Natural killer cell (primary cell): ENCODE measurements at regions of chr3 and their contacts with region 1.

Region 1: DNA sequence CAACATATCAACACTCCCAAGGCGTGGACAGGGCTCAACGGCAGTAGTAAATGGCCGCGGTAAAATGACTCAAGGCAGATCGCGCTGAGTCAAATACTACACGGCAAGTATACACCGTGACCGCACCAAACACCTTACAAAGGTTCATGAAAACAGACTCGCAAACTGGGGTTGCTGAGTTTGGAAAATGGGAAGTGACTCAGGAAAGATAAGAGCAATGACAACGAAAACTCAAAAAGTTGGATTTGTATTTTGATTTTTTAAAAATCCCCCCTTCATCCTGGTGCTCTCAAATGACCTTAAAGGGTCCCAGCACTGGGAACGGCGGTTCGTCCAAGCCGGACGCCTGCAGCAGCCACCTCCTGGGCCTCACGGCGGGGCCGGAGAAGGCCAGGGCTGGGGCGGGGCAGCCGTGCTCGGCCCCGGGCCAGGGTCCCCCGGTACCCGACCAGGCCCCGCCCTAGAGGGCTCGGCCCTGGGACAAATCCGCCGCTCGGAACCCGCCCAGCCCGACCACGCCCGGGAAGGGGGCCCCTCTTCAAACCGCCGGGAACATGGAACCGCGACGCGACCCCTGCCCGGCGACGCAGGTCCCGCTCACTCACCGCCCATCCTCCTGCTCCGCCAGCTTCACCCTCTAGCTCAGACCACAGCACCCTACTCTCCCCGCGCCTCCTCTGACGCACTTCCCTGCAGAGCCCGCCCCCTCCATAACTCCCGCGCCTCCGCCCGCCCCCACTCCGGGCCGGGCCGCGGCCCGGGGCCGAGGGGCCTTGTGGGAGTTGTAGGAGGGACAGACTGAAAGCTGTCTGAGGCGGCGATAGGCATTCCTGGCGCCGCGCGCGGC is at the start of gene CLDND1:
- DNase-seq: peak; percentile 88 to 96
- ATAC-seq: peak; percentile 94 to 100 (median 96)
- H3K4me3 ChIP-seq: peak within 1 kb of the TSS; percentile 69
- H3K4me3 Mint-ChIP-seq: peak within 1 kb of the TSS; percentile 92
- H3K27ac ChIP-seq: peak within 1 kb of the TSS; percentile 87
- H3K27ac Mint-ChIP-seq: peak within 1 kb of the TSS; percentile 51 to 86
- H3K4me1 ChIP-seq: peaks cover 15% of the 10 kb centered on the region
- H3K4me1 Mint-ChIP-seq: peaks cover 58 to 62% of the 10 kb centered on the region in 2 donors
- H3K27me3 ChIP-seq: no peaks in the 10 kb centered on the region
- H3K27me3 Mint-ChIP-seq: no peaks in the 10 kb centered on the region
- CTCF ChIP-seq: no peak
- total RNA-seq, gene CLDND1: 175 to 220 (median 219) TPM

Region 2: DNA sequence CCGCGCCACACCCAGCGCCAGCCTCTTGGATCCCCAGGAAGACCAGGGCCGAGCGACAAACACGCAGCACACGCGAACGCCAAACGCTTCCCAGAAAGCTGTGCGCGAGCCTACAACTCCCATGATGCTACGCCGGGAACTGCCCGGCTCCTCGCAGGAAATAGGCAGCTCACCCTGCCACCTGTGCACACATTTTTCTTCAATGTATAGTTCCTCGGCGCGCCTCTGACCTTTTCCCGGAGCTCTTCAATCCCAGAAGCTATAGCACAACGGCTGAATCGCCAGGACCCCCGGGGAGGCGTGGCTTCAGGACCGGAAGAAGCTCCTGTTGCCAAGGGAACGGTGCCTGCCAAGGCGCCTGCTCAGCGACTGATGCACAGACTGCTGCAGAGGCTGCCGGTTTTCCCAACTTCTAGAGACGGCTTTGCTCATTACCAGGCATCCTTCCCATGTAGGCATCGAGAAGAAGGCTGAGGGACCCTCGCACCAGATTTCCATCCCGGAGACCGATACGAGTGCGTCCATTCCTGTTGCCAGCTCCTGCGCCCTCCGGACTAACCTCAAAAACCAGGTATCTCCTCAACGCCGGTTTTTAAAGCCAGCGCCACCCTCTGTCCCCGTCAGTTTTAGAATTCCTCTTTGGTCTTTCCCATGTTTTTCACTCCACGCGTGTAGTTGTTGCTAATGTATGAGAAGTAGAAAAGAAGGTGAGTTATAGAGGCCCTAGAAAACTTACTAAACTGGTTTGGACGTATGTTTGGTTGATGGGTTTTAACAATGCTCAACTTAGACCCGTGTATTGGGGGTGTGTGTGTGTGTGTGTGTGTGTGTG is 757.8 kb before region 1 on chr3 and contains the start of gene ARL6:
- intact Hi-C with region 1: loop called (anchors 5 kb)
- DNase-seq: peak; percentile 56 to 82
- ATAC-seq: peak; percentile 89 to 90 (median 90)
- H3K4me3 ChIP-seq: peak within 1 kb of the TSS; percentile 91
- H3K4me3 Mint-ChIP-seq: peak within 1 kb of the TSS; percentile 98
- H3K27ac ChIP-seq: peak within 1 kb of the TSS; percentile 57
- H3K27ac Mint-ChIP-seq: peak within 1 kb of the TSS; percentile 86 to 91
- H3K4me1 ChIP-seq: peaks cover 5% of the 10 kb centered on the region
- H3K4me1 Mint-ChIP-seq: peaks cover 21 to 25% of the 10 kb centered on the region in 2 donors
- H3K27me3 ChIP-seq: no peaks in the 10 kb centered on the region
- H3K27me3 Mint-ChIP-seq: peaks cover 0 to 2% of the 10 kb centered on the region in 2 donors
- CTCF ChIP-seq: no peak
- total RNA-seq, gene ARL6: 2.1 to 4.9 (median 2.3) TPM

Region 3: DNA sequence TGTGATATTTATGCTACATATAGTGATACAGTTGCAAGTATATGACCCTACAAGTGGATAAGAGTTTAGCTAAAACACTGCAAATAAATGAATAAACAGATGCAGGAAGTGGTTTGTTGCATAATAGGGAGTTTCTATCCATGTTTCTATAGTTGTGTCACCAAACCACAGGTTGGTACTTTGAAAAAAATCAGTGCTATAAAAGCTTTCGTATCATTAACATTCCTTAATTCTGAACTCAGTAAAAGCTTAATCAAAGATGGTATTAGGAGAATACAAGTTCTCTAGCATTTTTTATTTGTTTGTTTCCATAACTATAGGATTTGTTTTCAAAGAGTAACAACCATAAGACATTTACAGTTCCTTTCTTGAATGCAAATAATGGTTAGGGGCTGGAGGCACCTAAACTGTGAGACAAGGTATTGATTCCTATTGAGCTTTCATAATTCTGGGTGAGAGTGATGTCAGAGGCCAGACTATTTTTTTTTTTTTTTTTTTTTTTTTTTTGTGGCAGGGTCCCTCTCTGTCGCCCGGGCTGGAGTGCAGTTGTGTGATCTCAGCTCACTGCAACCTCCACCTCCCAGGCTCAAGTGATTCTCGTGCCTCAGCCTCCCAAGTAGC is 41.3 kb after region 1 on chr3:
- intact Hi-C with region 1: loop called (anchors 1 kb)
- DNase-seq: peak in 1 of 2 donors; percentile 83
- ATAC-seq: peak; percentile 47 to 54 (median 52)
- H3K4me3 ChIP-seq: no peak overlapping the region
- H3K4me3 Mint-ChIP-seq: peak overlapping the region; percentile 32
- H3K27ac ChIP-seq: peak overlapping the region; percentile 92
- H3K27ac Mint-ChIP-seq: peak overlapping the region; percentile 90 to 91
- H3K4me1 ChIP-seq: peaks cover 45% of the 10 kb centered on the region
- H3K4me1 Mint-ChIP-seq: peaks cover 63 to 64% of the 10 kb centered on the region in 2 donors
- H3K27me3 ChIP-seq: no peaks in the 10 kb centered on the region
- H3K27me3 Mint-ChIP-seq: no peaks in the 10 kb centered on the region
- CTCF ChIP-seq: no peak

Region 4: GRCh38 chr3:98573181-98573728 is 50.8 kb after region 1 on chr3:
- intact Hi-C with region 1: loop called (anchors 2 kb)
- DNase-seq: peak in 1 of 2 donors; percentile 66
- ATAC-seq: peak in 2 of 3 donors; percentile 52 to 53
- H3K4me3 ChIP-seq: no peak overlapping the region
- H3K4me3 Mint-ChIP-seq: no peak overlapping the region
- H3K27ac ChIP-seq: no peak overlapping the region
- H3K27ac Mint-ChIP-seq: peak overlapping the region; percentile 28 to 31
- H3K4me1 ChIP-seq: no peaks in the 10 kb centered on the region
- H3K4me1 Mint-ChIP-seq: peaks cover 18 to 19% of the 10 kb centered on the region in 2 donors
- H3K27me3 ChIP-seq: no peaks in the 10 kb centered on the region
- H3K27me3 Mint-ChIP-seq: no peaks in the 10 kb centered on the region
- CTCF ChIP-seq: peak; percentile 73

Region 5: DNA sequence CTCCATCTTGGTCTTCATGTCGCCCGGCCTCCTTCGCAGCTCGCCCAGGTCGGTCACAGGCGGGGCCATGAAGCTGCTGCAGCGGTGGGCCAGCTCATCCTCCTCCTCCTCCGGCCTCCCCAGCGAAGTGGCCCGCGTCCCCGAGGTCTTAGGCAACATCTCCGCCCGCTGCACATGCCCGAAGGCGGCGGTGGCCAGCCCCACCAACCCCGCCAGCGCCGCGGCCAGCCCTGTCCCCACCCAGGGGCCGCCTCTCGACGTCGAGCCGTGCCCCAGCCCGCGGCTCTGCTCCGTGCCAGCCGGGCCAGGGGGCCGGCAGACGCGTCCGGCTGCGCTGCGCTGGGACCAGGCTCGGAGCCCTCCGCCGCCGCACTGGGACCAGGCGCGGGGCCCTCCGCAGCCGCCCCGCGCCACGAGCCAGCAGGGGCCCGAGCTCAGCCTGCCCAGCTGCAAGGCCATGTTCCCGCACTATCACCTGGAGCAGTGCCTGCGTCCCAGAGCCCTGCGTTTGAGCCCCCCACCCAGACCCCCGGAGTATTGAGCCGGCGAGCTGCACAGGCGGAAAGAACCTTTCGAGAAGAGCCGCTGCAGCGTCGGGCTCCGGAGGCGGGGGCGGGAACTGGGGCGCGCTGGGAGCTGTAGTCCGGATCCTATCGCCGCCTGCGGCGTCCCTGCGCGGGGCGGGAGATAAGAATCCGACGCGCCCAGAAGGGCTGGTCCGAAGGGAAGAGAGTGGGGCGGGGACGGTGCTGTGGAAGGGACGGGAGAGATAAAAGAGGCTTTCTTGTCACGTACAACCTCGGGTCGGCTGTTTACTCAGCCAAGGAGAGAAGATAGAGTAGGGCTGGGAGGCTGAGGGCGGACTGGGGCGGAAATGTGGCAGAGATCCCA is 70.8 kb after region 1 on chr3 and contains the start of gene CPOX:
- intact Hi-C with region 1: loop called (anchors 1 kb)
- DNase-seq: peak; percentile 63 to 88
- ATAC-seq: peak; percentile 92 to 96 (median 95)
- H3K4me3 ChIP-seq: peak within 1 kb of the TSS; percentile 62
- H3K4me3 Mint-ChIP-seq: peak within 1 kb of the TSS; percentile 97
- H3K27ac ChIP-seq: peak within 1 kb of the TSS; percentile 44
- H3K27ac Mint-ChIP-seq: peak within 1 kb of the TSS; percentile 87 to 94
- H3K4me1 ChIP-seq: peaks cover 14% of the 10 kb centered on the region
- H3K4me1 Mint-ChIP-seq: peaks cover 34 to 40% of the 10 kb centered on the region in 2 donors
- H3K27me3 ChIP-seq: no peaks in the 10 kb centered on the region
- H3K27me3 Mint-ChIP-seq: no peaks in the 10 kb centered on the region
- CTCF ChIP-seq: peak; percentile 11
- total RNA-seq, gene CPOX: 7.6 to 12.7 (median 12.2) TPM

Region 6: DNA sequence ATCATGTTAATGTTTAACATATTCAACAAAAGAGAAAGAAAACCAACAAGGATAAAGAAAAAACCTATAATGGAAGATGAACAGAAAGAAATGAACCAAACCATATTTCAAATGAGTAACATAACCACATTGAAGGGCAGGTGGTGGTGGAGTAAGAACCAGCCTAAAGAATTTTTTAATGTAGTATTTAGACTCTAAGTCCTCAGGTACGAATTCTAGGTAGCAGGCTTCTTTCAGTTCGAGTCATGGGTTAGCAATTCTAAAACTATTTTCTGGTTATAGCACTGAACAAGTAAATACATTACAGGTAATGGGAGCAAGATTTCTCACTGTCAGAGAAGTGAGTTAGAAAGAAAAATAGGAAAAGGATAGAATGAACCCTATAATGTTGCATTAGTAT is 354.7 kb after region 1 on chr3:
- intact Hi-C with region 1: no loop called
- DNase-seq: no peak
- ATAC-seq: no peak
- H3K4me3 ChIP-seq: no peak overlapping the region
- H3K4me3 Mint-ChIP-seq: no peak overlapping the region
- H3K27ac ChIP-seq: no peak overlapping the region
- H3K27ac Mint-ChIP-seq: no peak overlapping the region
- H3K4me1 ChIP-seq: no peaks in the 10 kb centered on the region
- H3K4me1 Mint-ChIP-seq: no peaks in the 10 kb centered on the region
- H3K27me3 ChIP-seq: no peaks in the 10 kb centered on the region
- H3K27me3 Mint-ChIP-seq: no peaks in the 10 kb centered on the region
- CTCF ChIP-seq: no peak

Region 7: GRCh38 chr3:100260685-100261484 is 1738.4 kb after region 1 on chr3 and contains the start of gene TBC1D23:
- intact Hi-C with region 1: loop called (anchors 5 kb)
- DNase-seq: peak; percentile 94 to 99
- ATAC-seq: peak; percentile 98 to 100 (median 99)
- H3K4me3 ChIP-seq: peak within 1 kb of the TSS; percentile 80
- H3K4me3 Mint-ChIP-seq: peak within 1 kb of the TSS; percentile 94
- H3K27ac ChIP-seq: peak within 1 kb of the TSS; percentile 93
- H3K27ac Mint-ChIP-seq: peak within 1 kb of the TSS; percentile 95 to 96
- H3K4me1 ChIP-seq: peaks cover 18% of the 10 kb centered on the region
- H3K4me1 Mint-ChIP-seq: peaks cover 39 to 48% of the 10 kb centered on the region in 2 donors
- H3K27me3 ChIP-seq: no peaks in the 10 kb centered on the region
- H3K27me3 Mint-ChIP-seq: no peaks in the 10 kb centered on the region
- CTCF ChIP-seq: no peak
- total RNA-seq, gene TBC1D23: 38.8 to 50.3 (median 45.4) TPM